Right ventricle myocardium inferior (tissue), 1 donor: ENCODE measurements at regions of chr17 and their contacts with region 1.

Region 1: DNA sequence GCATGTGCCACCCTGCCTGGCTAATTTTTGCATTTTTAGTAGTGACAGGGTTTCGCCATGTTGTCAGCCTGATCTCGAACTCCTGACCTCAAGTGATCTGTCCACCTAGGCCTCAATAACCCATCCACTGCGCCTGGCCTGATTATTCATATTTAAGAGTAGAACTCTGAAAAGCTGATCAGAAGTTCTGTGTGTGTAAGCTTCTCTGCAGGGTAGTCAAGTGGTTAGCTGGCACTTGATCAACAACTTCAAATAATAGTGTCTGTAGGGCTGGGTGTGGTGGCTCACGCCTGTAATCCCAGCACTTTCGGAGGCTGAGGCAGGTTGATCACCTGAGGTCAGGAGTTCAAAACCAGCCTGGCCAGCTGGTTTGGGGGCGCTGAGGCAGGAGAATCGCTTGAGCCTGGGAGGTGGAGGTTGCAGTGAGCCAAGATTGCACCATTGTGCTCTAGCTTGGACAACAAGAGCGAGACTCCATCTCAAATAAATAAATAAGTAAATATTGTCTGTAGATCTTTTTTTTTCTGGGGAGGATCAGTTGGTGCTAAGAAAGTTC is 26.1 kb downstream of the RPS6KB1 start:
- DNase-seq: no peak
- ATAC-seq: no peak

Region 2: DNA sequence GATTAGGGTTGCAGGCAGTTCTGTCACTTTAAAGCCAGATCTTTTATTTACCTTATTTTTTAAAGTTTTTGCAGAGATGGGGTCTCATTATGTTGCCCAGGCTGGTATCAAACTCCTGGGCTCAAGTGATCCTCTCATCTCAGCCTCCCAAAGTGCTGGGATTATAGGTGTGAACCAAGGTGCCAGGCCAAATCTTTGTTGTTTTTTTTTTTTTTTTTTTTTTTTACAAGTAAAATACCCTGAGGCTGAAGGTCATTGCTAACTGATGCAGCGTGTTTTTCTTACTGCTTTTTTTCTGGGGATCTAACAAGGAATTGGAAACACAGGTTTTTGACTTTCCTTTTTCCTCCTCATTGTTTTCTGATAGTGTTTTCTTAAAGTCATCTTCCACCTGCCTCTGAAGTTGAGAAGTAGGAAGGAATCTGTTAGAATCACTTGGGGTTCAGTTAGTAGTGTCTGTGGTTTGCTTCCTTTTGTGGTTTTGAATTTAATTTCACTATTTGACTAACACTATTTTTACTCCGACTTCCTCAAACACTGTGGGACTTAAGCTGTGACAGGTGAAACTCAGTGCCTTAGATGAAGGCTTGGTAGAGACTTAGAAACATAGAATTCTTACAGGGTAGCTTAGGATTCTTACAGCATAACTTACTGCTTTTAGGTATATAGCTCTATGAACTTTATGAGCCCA is 277.1 kb before region 1 on chr17:
- intact Hi-C with region 1: no loop called
- DNase-seq: no peak
- ATAC-seq: no peak

Region 3: DNA sequence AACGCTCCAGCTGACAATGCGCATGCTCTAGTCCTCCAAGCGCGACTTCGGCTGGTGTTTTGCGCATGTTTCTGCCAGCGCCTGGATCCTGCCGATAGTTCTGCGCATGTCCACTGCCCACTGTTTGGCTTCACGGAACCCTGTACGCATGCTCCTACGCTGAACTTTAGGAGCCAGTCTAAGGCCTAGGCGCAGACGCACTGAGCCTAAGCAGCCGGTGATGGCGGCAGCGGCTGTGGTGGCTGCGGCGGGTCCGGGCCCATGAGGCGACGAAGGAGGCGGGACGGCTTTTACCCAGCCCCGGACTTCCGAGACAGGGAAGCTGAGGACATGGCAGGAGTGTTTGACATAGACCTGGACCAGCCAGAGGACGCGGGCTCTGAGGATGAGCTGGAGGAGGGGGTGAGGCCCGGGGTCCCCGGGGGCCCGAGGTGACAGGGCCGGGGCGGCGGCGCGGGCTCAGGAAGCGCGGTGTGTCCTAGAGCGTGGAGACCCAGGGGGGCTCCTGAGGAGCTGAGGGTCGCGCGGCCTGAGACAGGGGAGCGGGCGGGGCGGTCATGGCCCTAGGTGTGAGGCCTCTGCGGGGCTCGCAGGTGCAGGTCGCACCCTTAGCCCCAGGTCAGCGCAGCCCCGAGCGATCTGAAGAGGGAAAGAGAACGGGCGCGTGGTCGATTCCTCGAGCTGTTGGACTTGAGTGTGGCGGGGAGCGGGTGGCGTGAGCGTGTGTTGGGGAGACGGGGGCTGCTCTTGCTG is 26.0 kb before region 1 on chr17 and contains the starts of genes RPS6KB1 and TUBD1:
- intact Hi-C with region 1: no loop called
- DNase-seq: peak; percentile 96
- ATAC-seq: peak; percentile 100
- total RNA-seq, gene RPS6KB1: 21.4 TPM
- total RNA-seq, gene TUBD1: 8.4 TPM

Region 4: GRCh38 chr17:60077672-60078519 is 158.8 kb after region 1 on chr17:
- intact Hi-C with region 1: loop called (anchors 10 kb)
- DNase-seq: no peak
- ATAC-seq: peak; percentile 37